ENCODE measurements at regions of chr20 and their contacts with region 1.

Region 1: GRCh38 chr20:6142348-6142993 is 19.6 kb upstream of the FERMT1 start:
- DNase-seq: peak in 1 of 2 donors; percentile 13
- ATAC-seq: peak in 1 of 2 donors; percentile 62
- H3K4me3 ChIP-seq: no peak overlapping the region
- H3K27ac ChIP-seq: no peak overlapping the region
- H3K4me1 ChIP-seq: no peaks in the 10 kb centered on the region
- H3K27me3 ChIP-seq: peaks cover 0 to 3% (median 0%) of the 10 kb centered on the region in 3 donors
- CTCF ChIP-seq: peak; percentile 32 to 80 (median 64)
- POLR2A ChIP-seq: no peak

Region 2: DNA sequence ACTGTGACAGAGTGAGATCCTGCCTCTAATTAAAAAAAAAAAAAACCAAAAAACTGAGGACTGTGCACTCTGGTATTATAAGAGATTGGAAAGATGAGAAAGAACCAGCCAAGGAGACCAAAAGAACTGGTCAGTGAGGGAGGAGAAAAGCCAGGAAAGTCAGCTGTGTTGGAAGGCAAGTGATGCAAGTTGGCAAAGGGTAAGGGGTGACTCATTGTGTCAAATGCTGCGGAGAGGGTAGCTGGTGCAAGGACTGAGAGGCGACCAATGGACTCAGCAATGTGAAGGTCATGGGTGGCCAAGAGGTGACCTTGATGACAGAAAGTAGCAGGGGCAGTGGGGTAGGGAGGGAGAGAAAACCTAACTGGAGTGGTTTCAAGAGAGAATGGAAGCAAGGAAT is 61.2 kb before region 1 on chr20:
- in situ Hi-C with region 1: no loop called
- intact Hi-C with region 1: no loop called
- DNase-seq: peak; percentile 6 to 27
- ATAC-seq: peak; percentile 72 to 74
- H3K4me3 ChIP-seq: no peak overlapping the region
- H3K27ac ChIP-seq: no peak overlapping the region
- H3K4me1 ChIP-seq: no peaks in the 10 kb centered on the region
- H3K27me3 ChIP-seq: no peaks in the 10 kb centered on the region
- CTCF ChIP-seq: no peak
- POLR2A ChIP-seq: no peak

Region 3: DNA sequence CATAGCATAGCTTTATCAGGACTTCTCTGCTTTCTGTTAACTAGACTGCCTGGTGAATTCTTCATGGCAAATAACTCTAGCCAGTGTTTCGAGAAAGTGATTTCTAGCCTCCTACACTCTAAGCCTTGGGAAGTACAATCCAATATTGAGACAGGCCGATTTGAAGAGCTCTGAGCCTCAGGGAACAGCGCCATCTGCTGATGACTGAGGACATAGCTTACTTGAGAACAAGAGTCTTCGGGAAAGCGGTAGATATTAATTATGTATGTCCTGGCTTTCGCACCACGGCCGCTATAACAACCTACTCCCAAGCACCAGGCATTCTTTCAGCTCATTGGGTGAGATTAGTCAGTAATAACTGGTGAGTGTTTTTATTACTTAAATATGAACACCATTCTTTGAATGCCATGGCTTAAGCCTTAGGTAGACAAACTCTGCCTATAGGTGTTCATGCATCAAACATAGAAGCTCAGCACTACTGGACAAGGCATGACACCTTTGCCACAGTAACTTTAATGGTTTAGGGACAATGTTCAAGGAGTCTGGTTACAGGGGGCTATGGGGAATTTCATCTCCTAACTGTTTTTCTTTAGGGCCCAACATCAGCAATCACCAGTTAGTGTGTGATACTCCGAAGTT is 1143.6 kb after region 1 on chr20:
- in situ Hi-C with region 1: loop called in 3 of 4 experiments (anchors 25 kb)
- intact Hi-C with region 1: loop called (anchors 5 kb)
- DNase-seq: peak; percentile 31 to 52
- ATAC-seq: peak; percentile 30 to 83
- H3K4me3 ChIP-seq: no peak overlapping the region
- H3K27ac ChIP-seq: no peak overlapping the region
- H3K4me1 ChIP-seq: no peaks in the 10 kb centered on the region
- H3K27me3 ChIP-seq: no peaks in the 10 kb centered on the region
- CTCF ChIP-seq: peak; percentile 43 to 77 (median 60)
- POLR2A ChIP-seq: no peak

Measured in gastrocnemius medialis (tissue), 4 donors.